PC-9 (cell line): ENCODE measurements at regions of chr10 and their contacts with region 1.

Region 1: DNA sequence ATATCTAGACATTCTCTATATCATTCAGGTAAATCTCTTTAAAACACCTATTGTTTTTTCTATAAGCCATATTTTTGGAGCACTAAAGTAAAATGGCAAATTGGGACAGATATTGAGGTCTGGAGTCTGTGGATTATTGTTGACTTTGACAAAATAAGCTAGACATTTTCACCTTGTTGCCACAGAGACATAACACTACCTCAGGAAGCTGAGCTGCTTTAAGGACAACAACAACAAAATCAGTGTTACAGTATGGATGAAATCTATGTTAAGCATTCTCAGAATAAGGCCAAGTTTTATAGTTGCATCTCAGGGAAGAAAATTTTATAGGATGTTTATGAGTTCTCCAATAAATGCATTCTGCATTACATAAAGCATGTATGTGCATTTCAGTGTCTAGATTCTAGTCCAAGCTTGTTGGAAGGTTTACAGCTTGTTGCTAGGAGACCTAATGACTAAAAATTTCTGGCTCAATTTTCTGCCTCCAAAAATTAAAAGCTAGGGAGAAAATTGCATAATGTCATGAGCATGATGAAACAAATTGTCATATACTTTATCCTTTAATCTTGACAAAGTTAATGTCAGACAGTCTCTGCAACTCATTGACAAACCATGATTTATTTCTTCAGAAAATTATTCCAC is 18.3 kb downstream of the LIPM start:
- DNase-seq: no peak
- H3K4me3 ChIP-seq: no peak overlapping the region
- H3K27ac ChIP-seq: 0 out of 2 replicates have a peak overlapping the region, but pooled peaks have one; percentile 26
- H3K4me1 ChIP-seq: no peaks in the 10 kb centered on the region
- H3K27me3 ChIP-seq: no peaks in the 10 kb centered on the region
- CTCF ChIP-seq: no peak

Region 2: DNA sequence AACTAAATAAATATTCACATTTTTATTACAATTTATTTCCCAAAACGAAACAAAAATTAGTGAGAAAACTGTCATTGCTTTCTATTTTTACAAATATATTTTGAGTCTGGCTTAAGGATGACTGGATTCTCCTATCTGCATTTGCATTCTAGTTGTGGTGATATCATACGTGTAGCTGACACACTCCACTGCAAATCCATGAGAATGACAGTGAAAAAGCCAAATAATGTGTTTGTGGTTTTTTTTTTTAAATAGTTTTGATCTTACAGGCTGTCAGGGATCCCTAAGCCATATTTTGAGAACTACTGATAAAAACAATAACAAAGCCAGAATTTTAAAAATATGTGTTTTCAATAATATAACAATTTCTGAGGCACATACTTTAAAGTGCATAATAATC is 53.4 kb after region 1 on chr10:
- CTCF ChIA-PET with region 1: interaction called, 20 read pairs
- POLR2A ChIA-PET with region 1: no interaction called
- intact Hi-C with region 1: no loop called
- DNase-seq: no peak
- H3K4me3 ChIP-seq: no peak overlapping the region
- H3K27ac ChIP-seq: no peak overlapping the region
- H3K4me1 ChIP-seq: no peaks in the 10 kb centered on the region
- H3K27me3 ChIP-seq: no peaks in the 10 kb centered on the region
- CTCF ChIP-seq: no peak